ENCODE measurements at regions of chr9 and their contacts with region 1.

Region 1: GRCh38 chr9:112288029-112288428 is 45.4 kb downstream of the PTBP3 start:
- DNase-seq: no peak
- ATAC-seq: no peak
- H3K4me3 Mint-ChIP-seq: no peak overlapping the region
- H3K27ac Mint-ChIP-seq: no peak overlapping the region
- H3K4me1 Mint-ChIP-seq: peaks cover 22% of the 10 kb centered on the region
- H3K27me3 Mint-ChIP-seq: no peaks in the 10 kb centered on the region
- CTCF ChIP-seq: no peak

Region 2: DNA sequence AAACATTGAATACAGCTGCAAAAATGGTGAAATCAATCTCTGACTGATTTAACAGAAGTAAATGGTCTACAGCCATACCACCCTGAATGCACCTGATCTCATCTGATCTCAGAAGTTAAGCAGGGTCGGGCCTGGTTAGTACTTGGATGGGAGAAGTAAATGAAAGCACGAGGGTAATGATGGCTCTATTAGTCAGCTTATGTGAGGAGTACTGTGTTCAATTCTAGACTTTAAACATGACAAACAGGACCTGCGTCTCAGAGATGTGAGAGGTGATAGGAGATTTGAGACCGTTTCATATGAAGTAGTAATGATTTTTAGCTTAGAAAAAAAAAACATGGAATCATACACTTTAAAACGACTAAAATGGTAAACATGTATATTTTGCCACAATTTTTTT is 35.8 kb before region 1 on chr9:
- CTCF ChIA-PET with region 1: no interaction called
- POLR2A ChIA-PET with region 1: no interaction called
- intact Hi-C with region 1: loop called (anchors 5 kb)
- DNase-seq: no peak
- ATAC-seq: no peak
- H3K4me3 Mint-ChIP-seq: no peak overlapping the region
- H3K27ac Mint-ChIP-seq: no peak overlapping the region
- H3K4me1 Mint-ChIP-seq: peaks cover 8% of the 10 kb centered on the region
- H3K27me3 Mint-ChIP-seq: no peaks in the 10 kb centered on the region
- CTCF ChIP-seq: no peak

Region 3: DNA sequence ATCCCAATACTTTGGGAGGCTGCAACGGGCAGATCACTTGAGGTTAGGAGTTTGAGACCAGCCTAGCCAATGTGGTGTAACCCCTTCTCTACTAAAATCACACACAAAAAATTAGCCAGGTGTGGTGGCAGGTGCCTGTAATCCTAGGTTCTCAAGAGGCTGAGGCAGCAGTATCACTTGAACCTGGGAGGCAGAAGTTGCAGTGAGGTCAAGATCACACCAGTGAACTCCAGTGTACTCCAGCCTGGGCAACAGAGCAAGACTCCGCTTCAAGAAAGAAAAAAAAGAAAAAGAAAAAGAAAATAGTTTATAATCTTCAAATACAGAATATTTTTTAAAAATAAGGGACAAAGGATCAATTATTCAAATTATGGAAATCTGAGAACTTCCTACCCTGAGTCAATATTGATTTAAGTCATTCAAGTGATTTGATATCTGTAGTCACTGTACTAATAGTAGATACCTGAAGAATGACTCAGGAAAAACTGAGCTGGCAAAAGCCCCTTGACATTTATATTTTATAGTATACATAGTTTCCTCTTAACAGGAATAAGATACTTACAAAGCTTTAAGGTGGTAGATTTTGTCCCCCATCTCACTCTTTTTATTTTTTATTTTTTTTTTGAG is 16.4 kb before region 1 on chr9:
- CTCF ChIA-PET with region 1: no interaction called
- POLR2A ChIA-PET with region 1: no interaction called
- intact Hi-C with region 1: no loop called
- DNase-seq: no peak
- ATAC-seq: no peak
- H3K4me3 Mint-ChIP-seq: no peak overlapping the region
- H3K27ac Mint-ChIP-seq: no peak overlapping the region
- H3K4me1 Mint-ChIP-seq: peaks cover 23% of the 10 kb centered on the region
- H3K27me3 Mint-ChIP-seq: no peaks in the 10 kb centered on the region
- CTCF ChIP-seq: no peak

Region 4: GRCh38 chr9:112360047-112360804 is 72.2 kb after region 1 on chr9:
- CTCF ChIA-PET with region 1: no interaction called
- POLR2A ChIA-PET with region 1: no interaction called
- intact Hi-C with region 1: no loop called
- DNase-seq: no peak
- ATAC-seq: no peak
- H3K4me3 Mint-ChIP-seq: no peak overlapping the region
- H3K27ac Mint-ChIP-seq: no peak overlapping the region
- H3K4me1 Mint-ChIP-seq: peaks cover 2% of the 10 kb centered on the region
- H3K27me3 Mint-ChIP-seq: no peaks in the 10 kb centered on the region
- CTCF ChIP-seq: no peak